Endothelial cell of umbilical vein (primary cell): ENCODE measurements at regions of chr19 and their contacts with region 1.

Region 1: DNA sequence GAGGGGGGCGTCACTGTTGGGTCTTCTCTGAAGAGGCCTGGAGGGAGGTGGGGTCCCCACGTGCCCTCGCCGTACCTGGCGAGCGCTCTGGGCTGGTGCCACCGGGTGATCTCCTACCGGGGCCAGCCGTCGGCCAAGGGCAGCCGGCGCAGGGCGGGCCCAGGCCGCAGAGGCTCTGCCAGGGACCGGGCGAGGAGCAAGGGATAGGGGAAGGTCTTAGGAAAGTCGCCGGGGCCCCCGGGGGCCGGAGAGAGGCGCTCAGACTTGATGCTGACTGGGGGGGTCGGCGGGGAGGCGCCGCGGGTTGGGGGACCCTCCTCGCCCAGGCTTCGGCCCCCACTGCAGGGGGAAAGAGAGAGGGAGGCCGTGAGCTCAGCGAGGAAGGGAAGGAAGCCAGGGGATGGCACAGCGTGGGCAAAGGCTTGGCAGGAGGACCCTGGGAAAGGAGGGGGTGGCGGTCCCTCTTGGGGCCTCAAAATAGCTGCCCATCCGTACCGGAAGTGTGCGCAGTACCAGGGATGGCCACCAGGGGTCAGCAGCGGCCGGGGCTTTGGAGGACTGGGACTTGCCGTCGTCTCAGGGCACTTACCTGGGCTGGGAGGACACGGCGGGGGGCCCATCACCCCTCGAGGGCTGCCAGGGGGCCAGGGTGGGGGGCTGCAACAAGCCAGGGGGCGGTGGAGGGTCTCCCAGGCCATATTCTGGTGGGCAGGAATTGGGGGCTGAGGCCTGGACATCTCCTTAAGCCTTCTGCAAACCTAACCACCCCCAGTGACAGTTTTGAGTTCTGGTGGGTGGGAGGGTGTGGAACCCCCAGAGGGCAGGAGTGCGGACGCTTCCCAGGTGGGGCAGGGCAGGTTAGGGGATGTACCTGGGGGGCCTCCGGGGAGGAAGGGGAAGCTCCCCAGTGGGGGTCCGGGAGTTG is 7.7 kb upstream of the TMEM161A start:
- DNase-seq: peak; percentile 59
- H3K4me3 ChIP-seq: no peak overlapping the region
- H3K27ac ChIP-seq: no peak overlapping the region
- H3K4me1 ChIP-seq: no peaks in the 10 kb centered on the region
- H3K27me3 ChIP-seq: no peaks in the 10 kb centered on the region
- CTCF ChIP-seq: peak; percentile 80 to 97
- POLR2A ChIP-seq: no peak

Region 2: DNA sequence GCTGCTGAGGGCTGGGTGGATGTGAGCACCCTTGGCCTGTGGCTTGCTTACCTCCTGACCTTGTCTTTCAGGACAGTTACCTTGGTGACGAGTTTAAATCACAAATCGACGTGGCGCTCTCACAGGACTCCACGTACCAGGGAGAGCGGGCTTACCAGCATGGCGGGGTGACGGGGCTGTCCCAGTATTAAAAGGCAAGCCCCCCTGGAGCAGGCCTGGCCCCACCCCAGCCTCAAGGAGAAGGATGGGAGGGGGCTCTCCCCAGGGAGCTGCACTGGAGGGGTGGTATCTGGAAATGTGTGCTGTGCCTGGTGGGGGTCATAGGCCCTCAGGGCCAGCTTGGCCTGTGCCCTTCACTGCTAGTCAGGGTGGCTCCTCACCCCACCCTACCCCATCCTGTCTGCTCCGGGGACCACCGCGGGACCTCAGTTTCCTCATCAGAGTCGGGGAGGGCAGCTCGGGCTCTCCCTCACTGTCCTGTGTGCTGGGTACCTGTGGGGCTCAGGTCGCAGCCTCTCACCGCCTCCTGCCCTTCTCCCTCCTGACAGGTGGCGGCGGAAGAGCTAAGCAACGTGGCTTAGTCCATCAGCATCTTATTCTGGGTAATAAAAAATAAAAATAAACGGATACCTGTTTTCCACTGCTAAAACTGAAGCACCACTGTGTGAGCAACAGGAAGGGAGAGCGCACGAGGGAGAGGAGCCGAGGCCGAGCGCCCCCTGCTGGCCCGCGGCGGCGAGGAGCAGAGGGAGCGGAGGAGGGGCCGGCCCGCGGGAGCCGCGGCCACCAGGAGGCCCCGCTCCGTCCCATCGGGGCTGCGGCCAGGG is 279.8 kb before region 1 on chr19:
- CTCF ChIA-PET with region 1: no interaction called
- POLR2A ChIA-PET with region 1: no interaction called
- dilution Hi-C with region 1: no loop called
- intact Hi-C with region 1: no loop called
- DNase-seq: peak; percentile 60
- H3K4me3 ChIP-seq: no peak overlapping the region
- H3K27ac ChIP-seq: no peak overlapping the region
- H3K4me1 ChIP-seq: no peaks in the 10 kb centered on the region
- H3K27me3 ChIP-seq: peaks cover 5 to 7% of the 10 kb centered on the region in 2 experiments
- CTCF ChIP-seq: peak; percentile 93 to 99
- POLR2A ChIP-seq: no peak

Region 3: GRCh38 chr19:19224852-19225494 is 79.0 kb after region 1 on chr19:
- CTCF ChIA-PET with region 1: interaction called, 4 read pairs
- POLR2A ChIA-PET with region 1: no interaction called
- dilution Hi-C with region 1: no loop called
- intact Hi-C with region 1: loop called (anchors 1 kb)
- DNase-seq: peak; percentile 35
- H3K4me3 ChIP-seq: peak overlapping the region in 2 of 3 experiments; percentile 14 to 15
- H3K27ac ChIP-seq: no peak overlapping the region
- H3K4me1 ChIP-seq: no peaks in the 10 kb centered on the region
- H3K27me3 ChIP-seq: peaks cover 2% of the 10 kb centered on the region in 2 experiments
- CTCF ChIP-seq: peak; percentile 56 to 67
- POLR2A ChIP-seq: no peak